ENCODE measurements at regions of chr14 and their contacts with region 1.

Region 1: DNA sequence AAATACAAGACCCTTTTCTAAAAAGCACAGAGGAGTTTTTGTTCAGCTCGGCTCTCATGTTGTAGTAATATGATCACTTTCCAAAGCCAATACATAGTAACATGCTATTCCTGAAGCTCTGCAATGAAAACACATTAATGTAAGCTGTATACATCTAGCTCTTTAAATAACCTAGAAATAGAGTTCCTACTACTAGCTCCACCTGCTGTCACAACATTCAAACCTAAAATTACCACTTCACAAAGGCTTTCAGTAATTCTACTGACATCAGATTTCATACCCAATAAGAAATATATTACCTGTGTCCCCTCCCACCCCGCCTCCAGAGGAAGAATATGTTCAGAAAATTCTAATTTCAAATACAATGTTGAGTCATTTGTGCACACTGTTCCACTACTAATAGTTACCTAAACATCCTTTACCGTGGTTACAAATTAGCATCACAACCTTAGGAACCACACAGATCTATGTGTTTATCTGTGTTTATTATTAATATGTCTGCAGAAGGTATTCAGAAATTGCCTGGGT is 17.8 kb downstream of the EFCAB11 start:
- DNase-seq: no peak
- H3K4me3 ChIP-seq: no peak overlapping the region
- H3K27ac ChIP-seq: no peak overlapping the region
- H3K27me3 ChIP-seq: no peaks in the 10 kb centered on the region
- CTCF ChIP-seq: peak; percentile 36

Region 2: GRCh38 chr14:89027097-89027740 is 909.5 kb before region 1 on chr14:
- CTCF ChIA-PET with region 1: interaction called, 15 read pairs
- POLR2A ChIA-PET with region 1: no interaction called
- DNase-seq: no peak
- H3K4me3 ChIP-seq: peak overlapping the region; percentile 71
- H3K27ac ChIP-seq: no peak overlapping the region
- H3K27me3 ChIP-seq: no peaks in the 10 kb centered on the region
- CTCF ChIP-seq: peak; percentile 60

Region 3: DNA sequence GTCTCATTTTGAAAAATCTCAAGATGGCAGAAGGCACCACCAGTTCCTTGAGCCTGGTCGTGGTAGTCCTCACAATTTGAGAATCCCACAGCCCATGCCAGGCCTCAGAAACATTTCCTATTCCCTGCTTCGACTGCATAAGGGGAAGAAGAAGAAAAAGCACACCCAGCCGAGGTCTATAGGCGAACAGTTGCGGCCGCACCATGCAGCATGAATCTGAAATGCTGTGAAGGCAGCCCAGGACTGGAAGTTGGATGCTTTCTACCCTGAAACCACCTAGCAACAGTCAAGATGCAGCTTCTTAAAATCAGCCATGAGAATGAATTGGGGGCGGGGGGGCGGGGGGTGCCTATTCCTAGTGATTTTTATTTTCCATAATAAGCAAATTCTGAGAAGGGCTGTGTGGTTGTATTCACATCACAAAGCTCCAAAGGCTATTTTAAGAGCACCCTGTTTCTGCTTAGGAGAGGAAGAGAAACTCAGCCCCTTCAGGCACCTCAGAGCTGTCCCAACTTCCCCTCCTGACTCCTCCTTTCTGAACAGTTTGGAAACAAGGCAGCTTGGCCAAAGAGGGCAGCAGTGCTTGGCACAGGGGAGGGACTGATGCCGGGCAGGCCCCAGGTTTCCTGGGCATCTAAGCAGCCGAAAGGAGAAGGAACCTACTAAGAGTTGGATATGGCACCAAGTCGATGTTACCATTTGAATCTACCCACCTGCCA is 347.2 kb before region 1 on chr14:
- CTCF ChIA-PET with region 1: interaction called, 10 read pairs
- POLR2A ChIA-PET with region 1: no interaction called
- DNase-seq: no peak
- H3K4me3 ChIP-seq: no peak overlapping the region
- H3K27ac ChIP-seq: no peak overlapping the region
- H3K27me3 ChIP-seq: no peaks in the 10 kb centered on the region
- CTCF ChIP-seq: no peak

Region 4: GRCh38 chr14:89922031-89922907 is 14.5 kb before region 1 on chr14:
- CTCF ChIA-PET with region 1: interaction called, 12 read pairs
- POLR2A ChIA-PET with region 1: no interaction called
- DNase-seq: no peak
- H3K4me3 ChIP-seq: no peak overlapping the region
- H3K27ac ChIP-seq: peak overlapping the region; percentile 39
- H3K27me3 ChIP-seq: no peaks in the 10 kb centered on the region
- CTCF ChIP-seq: no peak

Region 5: DNA sequence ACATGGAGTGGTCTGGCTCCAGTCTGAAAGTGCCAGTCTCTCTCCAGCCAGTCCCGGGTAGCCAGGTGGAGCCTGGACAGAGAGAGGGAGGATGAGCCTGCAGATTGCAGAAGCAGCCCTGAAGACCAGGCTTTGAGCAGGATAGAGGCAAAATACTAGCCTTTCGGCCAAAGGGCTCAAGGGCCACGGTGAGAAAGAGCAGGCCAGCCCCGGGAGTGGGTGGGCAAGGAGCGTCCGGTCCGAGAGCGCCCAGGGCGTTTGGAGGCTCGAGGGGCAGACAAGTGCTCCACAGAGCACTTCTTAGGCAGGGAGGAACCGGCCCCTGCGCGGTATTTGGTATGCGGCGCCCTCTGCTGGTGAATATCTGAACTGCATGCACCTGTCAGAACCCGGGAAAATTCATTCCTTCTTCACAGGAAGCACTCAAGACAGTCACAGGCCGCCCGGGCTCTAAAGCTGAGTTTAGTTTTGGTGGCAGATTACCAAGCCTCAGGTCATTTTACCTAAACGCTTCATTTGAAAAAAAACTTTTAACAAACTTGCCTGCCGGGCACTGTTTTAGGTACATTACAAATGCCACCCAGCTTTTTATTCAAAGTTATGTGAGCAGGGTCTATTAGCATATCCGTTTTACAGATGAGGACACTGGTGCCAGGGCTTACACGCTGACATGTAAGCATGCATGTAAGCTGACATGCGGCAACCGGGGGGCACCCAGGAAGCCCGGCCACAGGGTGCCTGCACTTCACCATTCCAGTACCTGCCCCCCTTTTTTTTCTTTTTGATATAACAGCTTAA is 298.7 kb after region 1 on chr14:
- CTCF ChIA-PET with region 1: interaction called, 14 read pairs
- POLR2A ChIA-PET with region 1: no interaction called
- DNase-seq: peak; percentile 3
- H3K4me3 ChIP-seq: no peak overlapping the region
- H3K27ac ChIP-seq: no peak overlapping the region
- H3K27me3 ChIP-seq: peaks cover 4% of the 10 kb centered on the region
- CTCF ChIP-seq: peak; percentile 81

Region 6: GRCh38 chr14:90428676-90429075 is 492.0 kb after region 1 on chr14:
- CTCF ChIA-PET with region 1: no interaction called
- POLR2A ChIA-PET with region 1: no interaction called
- DNase-seq: no peak
- H3K4me3 ChIP-seq: no peak overlapping the region
- H3K27ac ChIP-seq: no peak overlapping the region
- H3K27me3 ChIP-seq: peaks cover 12% of the 10 kb centered on the region
- CTCF ChIP-seq: no peak